Activated CD8-positive, alpha-beta T cell treated with anti-CD3 and anti-CD28 coated beads, Interleukin-2, amount 10 ng/mL, durations not matched to agents 7 days and 5 days (primary cell): ENCODE measurements at regions of chr6 and their contacts with region 1.

Region 1: GRCh38 chr6:37177077-37177934 is 7.4 kb downstream of the PIM1 start:
- DNase-seq: peak; percentile 43
- ATAC-seq: peak; percentile 13
- H3K4me3 Mint-ChIP-seq: peak overlapping the region; percentile 100
- H3K27ac Mint-ChIP-seq: peak overlapping the region; percentile 99
- H3K4me1 Mint-ChIP-seq: peaks cover 72% of the 10 kb centered on the region
- H3K27me3 Mint-ChIP-seq: no peaks in the 10 kb centered on the region

Region 2: GRCh38 chr6:37092923-37093920 is 84.1 kb before region 1 on chr6:
- CTCF ChIA-PET with region 1: no interaction called
- POLR2A ChIA-PET with region 1: no interaction called
- DNase-seq: no peak
- ATAC-seq: no peak
- H3K4me3 Mint-ChIP-seq: no peak overlapping the region
- H3K27ac Mint-ChIP-seq: no peak overlapping the region
- H3K4me1 Mint-ChIP-seq: peaks cover 21% of the 10 kb centered on the region
- H3K27me3 Mint-ChIP-seq: peaks cover 3% of the 10 kb centered on the region

Region 3: DNA sequence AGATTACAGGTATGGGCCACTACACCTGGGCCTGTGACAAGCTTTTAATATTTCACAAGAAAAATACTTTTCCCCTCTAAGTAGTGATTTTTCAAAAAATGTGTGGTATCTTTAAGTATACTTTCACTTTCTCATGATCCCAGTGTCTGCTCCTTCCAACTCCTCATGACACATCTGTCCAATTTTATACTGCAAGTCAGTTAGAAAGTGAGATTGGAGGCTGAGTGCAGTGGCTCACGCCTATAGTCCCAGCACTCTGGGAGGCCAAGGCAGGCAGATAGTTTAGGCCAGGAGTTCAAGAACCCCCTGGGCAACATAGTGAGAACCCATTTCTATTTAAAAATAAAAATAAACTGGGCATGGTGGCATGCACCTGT is 12.8 kb after region 1 on chr6:
- CTCF ChIA-PET with region 1: interaction called, 45 read pairs
- POLR2A ChIA-PET with region 1: interaction called, 128 read pairs
- DNase-seq: no peak
- ATAC-seq: peak; percentile 45
- H3K4me3 Mint-ChIP-seq: peak overlapping the region; percentile 12
- H3K27ac Mint-ChIP-seq: peak overlapping the region; percentile 85
- H3K4me1 Mint-ChIP-seq: peaks cover 76% of the 10 kb centered on the region
- H3K27me3 Mint-ChIP-seq: no peaks in the 10 kb centered on the region